ENCODE measurements at regions of chr2 and their contacts with region 1.

Region 1: DNA sequence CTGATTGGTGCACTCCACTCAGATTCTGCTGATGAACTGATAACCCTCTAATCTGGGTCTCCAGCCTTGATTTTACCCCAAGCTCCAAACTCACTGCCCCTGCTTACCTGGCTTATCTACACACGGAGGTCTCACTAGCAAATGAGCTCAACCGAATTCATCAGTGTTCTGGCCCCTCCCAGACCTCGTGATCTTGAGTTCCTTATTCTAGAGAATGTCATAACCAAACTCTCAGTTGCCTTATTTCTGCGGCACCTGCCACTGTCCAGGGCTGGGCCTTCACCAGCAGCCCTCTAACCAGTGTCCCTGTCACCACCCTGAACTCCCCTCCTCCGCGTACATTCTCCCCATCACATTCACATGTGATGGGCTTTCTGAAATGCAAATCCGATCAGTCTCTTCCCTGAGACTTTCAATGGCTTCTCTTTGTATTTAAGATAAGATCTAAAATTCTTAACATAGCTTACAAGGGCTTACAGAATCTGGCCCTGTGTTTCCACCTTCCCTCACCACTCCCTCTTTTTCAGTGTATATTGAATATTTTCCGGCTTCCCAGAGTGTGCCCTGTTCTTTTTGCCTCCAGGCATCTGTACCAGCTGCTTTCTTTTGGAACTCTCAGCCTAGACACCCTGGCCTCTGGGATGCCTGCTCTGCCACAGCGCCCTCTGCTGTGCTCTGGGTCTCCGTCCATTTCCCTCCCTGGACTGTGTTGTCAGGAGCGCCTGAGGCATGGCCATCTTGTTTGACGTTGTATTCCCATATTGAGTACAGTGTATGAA is 31.1 kb downstream of the NAB1 start:
- DNase-seq: peak; percentile 23 to 71
- ATAC-seq: peak; percentile 86 to 95
- H3K4me3 ChIP-seq: no peak overlapping the region
- H3K27ac ChIP-seq: no peak overlapping the region
- H3K4me1 ChIP-seq: peaks cover 18% of the 10 kb centered on the region; the same call in 2 of the 3 replicates
- CTCF ChIP-seq: peak; percentile 45; the same call in 2 of the 3 replicates
- EP300 ChIP-seq: no peak
- POLR2A ChIP-seq: no peak
- RAD21 ChIP-seq: peak; percentile 45 to 63

Region 2: DNA sequence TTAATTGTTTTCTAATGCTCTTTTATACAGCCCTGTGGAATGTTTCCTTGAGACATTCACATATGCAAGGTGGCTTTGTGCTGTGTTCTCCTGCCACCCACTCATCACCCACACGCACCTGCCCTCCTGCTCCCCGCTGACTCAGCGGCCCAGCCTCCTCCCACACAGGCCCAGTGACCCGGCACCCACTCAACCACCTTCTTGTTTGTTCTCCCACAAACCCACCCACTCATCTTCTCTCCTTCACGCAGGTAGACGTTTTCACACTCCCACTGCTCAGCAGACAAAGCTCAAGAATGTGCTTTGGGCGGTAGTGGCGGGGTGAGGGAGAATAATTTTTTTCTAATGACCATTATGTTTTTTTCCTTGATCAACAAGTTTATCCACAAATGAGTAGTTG is 116.9 kb before region 1 on chr2:
- CTCF ChIA-PET with region 1: no interaction called
- POLR2A ChIA-PET with region 1: no interaction called
- DNase-seq: no peak
- ATAC-seq: no peak
- H3K4me3 ChIP-seq: no peak overlapping the region
- H3K27ac ChIP-seq: no peak overlapping the region
- H3K4me1 ChIP-seq: no peaks in the 10 kb centered on the region
- CTCF ChIP-seq: no peak
- EP300 ChIP-seq: no peak
- POLR2A ChIP-seq: no peak
- RAD21 ChIP-seq: no peak

Region 3: GRCh38 chr2:190693533-190694232 is 13.7 kb after region 1 on chr2:
- CTCF ChIA-PET with region 1: interaction called, 10 read pairs
- POLR2A ChIA-PET with region 1: no interaction called
- DNase-seq: no peak
- ATAC-seq: no peak
- H3K4me3 ChIP-seq: no peak overlapping the region
- H3K27ac ChIP-seq: no peak overlapping the region
- H3K4me1 ChIP-seq: no peaks in the 10 kb centered on the region
- CTCF ChIP-seq: no peak
- EP300 ChIP-seq: no peak
- POLR2A ChIP-seq: no peak
- RAD21 ChIP-seq: no peak